ENCODE measurements at regions of chr4 and their contacts with region 1.

Region 1: DNA sequence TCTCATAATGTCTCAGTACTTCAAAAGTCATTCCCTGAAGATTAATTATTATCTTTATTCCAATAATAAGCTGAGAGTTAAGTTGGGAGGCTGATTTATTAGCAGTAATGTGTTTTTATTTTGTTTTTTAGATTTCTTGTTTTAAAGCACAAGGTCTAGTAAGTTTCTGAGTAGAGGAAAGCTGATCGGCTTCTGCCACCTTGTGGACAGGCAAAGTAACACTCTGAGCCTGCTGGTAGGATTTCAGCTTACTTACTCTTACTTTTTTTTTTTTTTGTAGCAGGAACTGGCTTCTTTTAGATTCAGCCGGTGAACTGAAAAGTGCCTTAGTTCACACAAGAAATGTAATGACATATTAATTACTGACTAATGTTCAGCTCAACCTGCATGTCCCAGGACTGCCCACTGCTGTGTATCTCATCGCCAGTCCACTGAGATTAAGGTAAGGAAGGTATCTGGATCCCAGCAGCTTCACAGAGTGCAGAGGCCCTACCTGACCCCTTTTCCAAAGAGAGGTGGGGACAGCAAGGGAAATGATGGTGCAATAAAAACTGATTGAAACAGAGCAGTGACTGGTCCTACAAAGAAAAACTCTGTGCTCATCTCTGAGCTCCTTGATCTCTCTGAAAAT is 126.5 kb downstream of the ADGRA3 start:
- DNase-seq: peak; percentile 72
- H3K4me3 Mint-ChIP-seq: no peak overlapping the region
- H3K27ac Mint-ChIP-seq: no peak overlapping the region
- H3K4me1 Mint-ChIP-seq: peaks cover 11% of the 10 kb centered on the region
- H3K27me3 Mint-ChIP-seq: no peaks in the 10 kb centered on the region

Region 2: GRCh38 chr4:21790438-21791029 is 598.8 kb before region 1 on chr4:
- CTCF ChIA-PET with region 1: interaction called, 96 read pairs
- intact Hi-C with region 1: loop called (anchors 1 kb)
- DNase-seq: no peak
- H3K4me3 Mint-ChIP-seq: no peak overlapping the region
- H3K27ac Mint-ChIP-seq: no peak overlapping the region
- H3K4me1 Mint-ChIP-seq: no peaks in the 10 kb centered on the region
- H3K27me3 Mint-ChIP-seq: peaks cover 1% of the 10 kb centered on the region

Region 3: GRCh38 chr4:21921526-21922180 is 467.7 kb before region 1 on chr4:
- CTCF ChIA-PET with region 1: no interaction called
- intact Hi-C with region 1: no loop called
- DNase-seq: no peak
- H3K4me3 Mint-ChIP-seq: no peak overlapping the region
- H3K27ac Mint-ChIP-seq: no peak overlapping the region
- H3K4me1 Mint-ChIP-seq: no peaks in the 10 kb centered on the region
- H3K27me3 Mint-ChIP-seq: peaks cover 2% of the 10 kb centered on the region

Region 4: DNA sequence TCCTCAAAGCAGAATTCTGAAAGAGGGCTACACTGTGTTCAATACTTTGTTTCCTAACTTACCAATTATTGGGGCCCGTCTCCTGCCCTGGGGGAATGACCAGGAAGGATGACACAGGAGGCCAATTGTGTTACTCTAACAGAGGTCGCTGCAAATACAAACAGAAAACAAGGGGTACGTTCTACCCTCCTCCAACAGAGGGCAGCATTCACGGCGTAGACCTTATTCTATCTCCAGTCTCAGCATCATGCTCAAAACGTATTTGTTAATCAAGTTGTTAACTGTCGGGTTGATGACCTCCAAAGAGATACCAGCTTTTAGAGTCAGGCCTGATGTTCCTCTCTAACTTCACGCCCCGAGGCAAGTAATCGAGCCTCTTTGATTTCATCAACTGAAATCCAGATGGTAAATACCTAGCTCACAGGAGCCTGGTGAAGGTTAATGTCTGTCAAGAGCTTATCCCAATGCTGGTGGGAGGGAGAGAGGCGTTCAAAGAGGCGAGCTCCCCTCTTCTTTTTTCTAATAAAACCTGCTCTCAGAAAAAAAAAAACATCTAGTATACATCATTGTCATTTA is 259.8 kb before region 1 on chr4:
- CTCF ChIA-PET with region 1: no interaction called
- intact Hi-C with region 1: loop called (anchors 1 kb)
- DNase-seq: peak; percentile 40
- H3K4me3 Mint-ChIP-seq: no peak overlapping the region
- H3K27ac Mint-ChIP-seq: no peak overlapping the region
- H3K4me1 Mint-ChIP-seq: no peaks in the 10 kb centered on the region
- H3K27me3 Mint-ChIP-seq: peaks cover 3% of the 10 kb centered on the region

Region 5: DNA sequence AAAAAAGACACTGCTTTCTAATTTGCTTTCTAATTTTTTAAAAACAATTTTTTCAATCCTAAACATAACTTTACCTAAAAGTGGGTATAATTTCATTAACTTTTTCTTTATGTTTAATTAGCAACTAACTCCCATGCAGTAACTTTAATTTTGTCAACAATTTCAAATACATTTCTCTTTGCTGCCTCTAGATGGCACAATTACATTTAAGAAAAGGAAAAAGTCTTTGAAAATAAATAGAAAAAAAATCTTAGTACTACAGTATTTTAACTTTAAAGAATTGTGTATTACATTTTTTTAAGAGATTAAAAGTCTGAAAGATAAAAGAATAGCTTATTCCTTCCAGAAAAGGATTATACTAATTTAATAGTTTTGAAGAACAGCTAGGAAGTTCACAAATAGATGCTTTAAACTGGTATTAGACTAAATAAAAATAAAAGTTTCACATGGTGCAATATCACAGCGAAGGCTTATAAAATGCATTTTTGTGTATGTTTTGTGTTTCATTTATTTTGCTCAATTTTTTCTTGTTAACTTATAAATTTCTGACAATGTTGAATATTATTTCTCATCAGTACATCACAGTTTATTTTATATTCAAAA is 21.4 kb after region 1 on chr4:
- CTCF ChIA-PET with region 1: interaction called, 13 read pairs
- intact Hi-C with region 1: no loop called
- DNase-seq: no peak
- H3K4me3 Mint-ChIP-seq: no peak overlapping the region
- H3K27ac Mint-ChIP-seq: no peak overlapping the region
- H3K4me1 Mint-ChIP-seq: no peaks in the 10 kb centered on the region
- H3K27me3 Mint-ChIP-seq: no peaks in the 10 kb centered on the region

Region 6: DNA sequence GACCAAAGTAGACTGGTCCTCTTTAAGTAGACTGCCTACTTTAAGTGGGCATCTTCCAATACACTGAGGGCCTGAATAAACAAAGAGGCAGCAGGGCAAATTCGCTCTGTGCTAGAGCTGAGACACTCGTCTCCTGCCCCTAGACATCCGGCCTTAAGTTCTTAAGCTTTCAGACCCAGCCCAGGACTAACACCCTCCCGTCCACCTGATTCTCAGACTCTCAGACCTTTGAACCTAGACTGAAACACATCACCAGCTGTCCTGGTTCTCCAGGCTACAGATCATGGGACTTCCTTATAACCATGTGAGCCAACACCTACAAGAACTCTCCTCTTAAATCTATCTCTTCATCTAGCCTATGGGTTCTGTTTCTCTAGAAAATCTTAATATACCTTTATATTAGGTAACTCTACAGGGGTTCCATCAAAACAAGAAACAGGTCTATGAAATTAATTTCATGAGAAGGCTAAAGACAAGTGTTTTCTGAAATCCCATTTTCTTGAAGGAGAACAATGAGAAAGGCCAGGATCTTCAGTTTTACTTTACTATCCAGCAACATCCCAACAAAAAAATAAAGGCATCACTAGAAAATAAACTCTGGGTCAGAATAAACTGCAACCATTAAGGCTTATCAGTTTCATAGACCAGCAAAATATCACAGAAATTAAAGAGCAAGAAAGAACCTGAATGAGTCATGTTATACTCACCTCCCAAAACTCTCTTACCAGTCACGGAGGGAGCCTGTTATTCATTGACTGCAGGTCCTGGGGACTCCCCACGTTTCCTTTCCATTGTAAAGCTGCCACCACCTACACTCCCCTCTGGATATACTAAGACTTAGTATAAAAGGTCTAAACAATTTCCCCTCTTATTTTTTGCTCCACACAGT is 111.7 kb after region 1 on chr4:
- CTCF ChIA-PET with region 1: interaction called, 3 read pairs
- intact Hi-C with region 1: loop called (anchors 2 kb)
- DNase-seq: peak; percentile 72
- H3K4me3 Mint-ChIP-seq: no peak overlapping the region
- H3K27ac Mint-ChIP-seq: peak overlapping the region; percentile 72
- H3K4me1 Mint-ChIP-seq: peaks cover 24% of the 10 kb centered on the region
- H3K27me3 Mint-ChIP-seq: no peaks in the 10 kb centered on the region

Measured in activated naive CD4-positive, alpha-beta T cell treated with anti-CD3 and anti-CD28 coated beads for 36 hours (primary cell).